SK-N-SH (cell line): ENCODE measurements at regions of chr15 and their contacts with region 1.

Region 1: GRCh38 chr15:101686718-101687117 is 34.5 kb upstream of the TM2D3 start:
- DNase-seq: no peak
- H3K4me3 ChIP-seq: no peak overlapping the region
- H3K27ac ChIP-seq: peak overlapping the region in 1 of 2 experiments; percentile 58; a peak in 1 of 4 replicates
- H3K4me1 ChIP-seq: peaks cover 0 to 11% of the 10 kb centered on the region in 2 experiments; a peak in 2 of 4 replicates
- H3K27me3 ChIP-seq: no peaks in the 10 kb centered on the region
- CTCF ChIP-seq: no peak
- EP300 ChIP-seq: peak; percentile 32 to 56; a peak in 2 of 4 replicates
- RAD21 ChIP-seq: no peak

Region 2: GRCh38 chr15:101709466-101709865 is 22.7 kb after region 1 on chr15:
- CTCF ChIA-PET with region 1: interaction called, 11 read pairs
- POLR2A ChIA-PET with region 1: no interaction called
- DNase-seq: no peak
- H3K4me3 ChIP-seq: no peak overlapping the region
- H3K27ac ChIP-seq: no peak overlapping the region
- H3K4me1 ChIP-seq: 0 out of 4 replicates have a peak, but pooled peaks cover 0 to 5% of the 10 kb centered on the region in 2 experiments
- H3K27me3 ChIP-seq: no peaks in the 10 kb centered on the region
- CTCF ChIP-seq: no peak
- EP300 ChIP-seq: no peak
- RAD21 ChIP-seq: no peak

Region 3: DNA sequence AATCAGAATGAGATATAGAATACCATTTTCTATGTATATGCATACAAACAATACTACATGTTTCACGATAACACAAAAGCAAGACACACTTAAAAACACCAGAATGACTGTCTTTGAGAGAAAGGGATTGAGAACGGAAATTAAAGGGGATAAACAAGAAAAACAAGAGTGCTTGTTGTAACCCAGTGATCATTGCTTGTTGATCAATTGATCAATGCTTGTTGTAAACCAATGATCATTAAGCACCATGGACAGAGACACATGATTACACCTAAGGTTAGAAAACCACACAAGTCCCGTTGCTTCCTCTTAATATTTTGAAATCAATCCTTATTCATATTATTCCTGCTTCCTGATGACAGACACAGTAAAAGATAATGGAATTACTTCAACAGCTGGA is 124.2 kb after region 1 on chr15:
- CTCF ChIA-PET with region 1: no interaction called
- POLR2A ChIA-PET with region 1: no interaction called
- DNase-seq: no peak
- H3K4me3 ChIP-seq: no peak overlapping the region
- H3K27ac ChIP-seq: no peak overlapping the region
- H3K4me1 ChIP-seq: no peaks in the 10 kb centered on the region; a peak in 1 of 4 replicates
- H3K27me3 ChIP-seq: no peaks in the 10 kb centered on the region
- CTCF ChIP-seq: no peak
- EP300 ChIP-seq: no peak
- RAD21 ChIP-seq: no peak